ENCODE measurements at regions of chr15 and their contacts with region 1.

Region 1: DNA sequence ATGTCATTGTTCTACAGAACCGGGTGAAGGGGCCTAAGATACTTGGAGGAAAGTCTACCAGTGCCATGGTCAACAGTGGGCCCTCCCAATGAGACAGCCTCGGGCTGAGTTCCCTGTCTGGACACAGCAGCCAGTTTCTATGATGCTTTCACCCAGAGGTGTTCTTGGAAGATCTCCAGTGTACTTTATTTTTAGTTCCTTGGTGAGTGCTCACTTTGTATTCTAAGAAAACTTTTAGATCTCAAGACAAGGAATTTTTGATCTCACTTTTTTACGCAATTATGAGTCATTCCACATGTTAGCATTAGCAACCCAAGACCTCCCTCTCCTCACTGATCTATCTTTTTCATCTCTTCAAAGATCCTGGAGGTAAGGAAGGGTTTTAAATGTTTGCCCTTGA is 287.7 kb downstream of the RORA start:
- DNase-seq: no peak
- H3K4me3 ChIP-seq: no peak overlapping the region
- H3K27ac ChIP-seq: peak overlapping the region in 2 of 4 donors; percentile 61 to 70
- H3K4me1 ChIP-seq: peaks cover 0 to 33% (median 22%) of the 10 kb centered on the region in 4 donors
- H3K27me3 ChIP-seq: no peaks in the 10 kb centered on the region
- CTCF ChIP-seq: no peak
- EP300 ChIP-seq: no peak
- POLR2A ChIP-seq: no peak

Region 2: GRCh38 chr15:60961541-60962485 is 20.4 kb after region 1 on chr15:
- intact Hi-C with region 1: no loop called
- DNase-seq: no peak
- H3K4me3 ChIP-seq: no peak overlapping the region
- H3K27ac ChIP-seq: peak overlapping the region in 1 of 4 donors; percentile 26
- H3K4me1 ChIP-seq: peaks cover 0 to 9% (median 3%) of the 10 kb centered on the region in 4 donors
- H3K27me3 ChIP-seq: no peaks in the 10 kb centered on the region
- CTCF ChIP-seq: no peak
- EP300 ChIP-seq: no peak
- POLR2A ChIP-seq: no peak

Region 3: DNA sequence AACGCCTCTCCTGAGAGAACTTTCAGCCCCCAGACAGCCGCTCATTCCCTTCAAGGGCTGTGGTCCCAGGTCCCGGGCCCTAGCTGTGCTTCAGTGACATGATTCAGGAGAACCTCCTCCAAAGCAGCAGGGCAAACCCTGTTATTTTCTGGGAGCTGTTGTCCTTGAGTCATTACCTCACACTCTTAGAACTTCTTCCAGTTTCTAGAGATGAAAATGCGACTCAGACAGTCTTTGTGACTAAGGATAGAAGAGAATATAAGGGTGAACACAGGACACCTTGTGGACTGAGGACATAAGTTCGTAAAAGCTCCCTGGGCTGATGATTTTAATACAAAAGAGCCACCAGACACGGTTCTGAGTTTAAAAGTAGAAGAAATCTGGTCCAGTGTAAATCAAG is 83.9 kb after region 1 on chr15:
- intact Hi-C with region 1: loop called (anchors 5 kb)
- DNase-seq: no peak
- H3K4me3 ChIP-seq: no peak overlapping the region
- H3K27ac ChIP-seq: peak overlapping the region; percentile 59 to 85 (median 78)
- H3K4me1 ChIP-seq: peaks cover 0 to 38% (median 31%) of the 10 kb centered on the region in 4 donors
- H3K27me3 ChIP-seq: no peaks in the 10 kb centered on the region
- CTCF ChIP-seq: no peak
- EP300 ChIP-seq: no peak
- POLR2A ChIP-seq: no peak

Measured in sigmoid colon (tissue), 7 donors.